Left colon (tissue), 2 donors: ENCODE measurements at regions of chr5 and their contacts with region 1.

Region 1: GRCh38 chr5:102971697-102972293 is 148.1 kb downstream of the GIN1 start:
- DNase-seq: no peak
- ATAC-seq: peak; percentile 64

Region 2: GRCh38 chr5:102583276-102584124 is 388.3 kb before region 1 on chr5:
- intact Hi-C with region 1: loop called in 1 of 2 experiments (anchors 10 kb)
- DNase-seq: no peak
- ATAC-seq: no peak

Region 3: GRCh38 chr5:102782311-102782770 is 189.5 kb before region 1 on chr5:
- intact Hi-C with region 1: loop called in 1 of 2 experiments (anchors 10 kb)
- DNase-seq: no peak
- ATAC-seq: no peak

Region 4: DNA sequence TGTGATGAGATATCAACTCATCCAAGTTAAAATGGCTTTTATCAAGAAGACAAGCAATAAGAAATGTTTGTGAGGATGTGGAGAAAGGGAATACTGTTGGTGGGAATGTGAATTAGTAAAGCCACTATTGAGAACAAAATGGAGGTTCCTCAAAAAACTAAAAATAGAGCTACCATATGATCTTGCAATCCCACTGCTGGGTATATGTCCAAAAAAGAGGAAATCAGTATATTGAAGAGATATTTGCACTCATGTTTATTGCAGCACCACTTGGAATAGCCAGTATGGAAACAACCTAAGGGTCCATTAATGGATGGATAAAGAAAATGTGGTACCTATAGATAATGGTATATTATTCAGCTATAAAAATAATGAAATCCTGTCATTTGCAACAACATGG is 173.4 kb after region 1 on chr5:
- intact Hi-C with region 1: loop called in 1 of 2 experiments (anchors 10 kb)
- DNase-seq: no peak
- ATAC-seq: no peak

Region 5: DNA sequence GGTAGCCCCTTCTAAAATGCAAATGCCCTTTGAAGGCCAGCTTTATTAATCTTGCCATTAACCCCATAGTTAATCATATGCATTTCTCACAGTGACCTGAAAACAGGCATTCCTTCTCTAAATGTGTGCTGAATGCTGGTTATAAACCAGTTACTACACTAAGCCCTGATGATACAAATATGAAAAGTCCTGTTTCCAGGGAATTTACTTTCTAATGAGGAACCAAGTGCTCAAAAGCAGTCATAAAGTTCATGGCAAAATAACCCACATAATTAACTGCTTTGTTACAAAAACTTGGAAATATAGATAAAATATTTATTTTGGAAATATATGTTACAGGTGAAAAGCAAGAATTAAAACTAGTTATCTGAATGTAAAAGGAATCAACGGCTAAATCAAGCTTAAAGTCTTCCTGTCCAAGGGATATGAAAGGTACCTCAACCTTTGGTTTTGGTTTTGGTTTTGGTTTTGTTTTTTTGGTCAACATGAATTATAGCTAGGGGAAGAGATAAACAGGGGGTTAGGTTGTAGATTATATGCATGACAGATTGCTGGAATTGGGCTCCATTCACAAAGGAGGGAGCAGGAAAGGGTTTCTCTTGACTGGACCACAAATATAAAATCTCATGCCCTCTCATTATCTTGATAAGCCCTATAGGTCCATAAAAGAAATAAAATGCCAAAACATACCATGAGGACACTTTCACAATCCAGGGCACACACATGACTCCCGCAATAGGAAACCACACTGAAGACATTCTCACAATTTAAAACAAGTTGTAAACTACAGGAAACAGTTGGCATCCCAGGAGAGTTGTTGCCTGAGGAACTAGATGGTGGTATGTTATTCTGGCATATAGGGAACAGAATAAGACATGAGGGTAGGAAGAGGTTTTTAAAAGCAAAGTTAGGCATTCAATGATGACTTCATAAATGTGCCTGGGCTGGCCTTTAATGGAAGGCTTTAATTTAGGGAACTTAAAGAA is 240.1 kb after region 1 on chr5:
- intact Hi-C with region 1: no loop called
- DNase-seq: no peak
- ATAC-seq: no peak